Panc1 (cell line): ENCODE measurements at regions of chr1 and their contacts with region 1.

Region 1: DNA sequence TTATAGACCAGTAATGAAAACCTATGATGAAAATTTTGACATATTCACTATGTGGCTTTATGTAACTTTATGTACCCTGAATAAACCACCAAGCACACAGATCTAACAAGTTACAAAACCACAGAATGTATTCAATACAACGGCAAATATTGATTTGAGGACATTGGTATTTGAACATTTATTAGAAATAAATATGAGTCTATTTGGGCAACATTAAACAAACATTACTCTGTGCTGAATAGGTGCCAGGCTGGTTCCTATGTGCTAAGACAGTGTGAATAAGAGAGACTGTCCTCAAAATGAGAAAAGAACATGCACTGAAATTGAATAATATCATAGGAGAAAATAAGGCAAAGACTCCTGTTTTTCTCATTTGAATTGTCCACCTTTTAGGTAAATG is 1341.2 kb downstream of the PLA2G4A start:
- DNase-seq: no peak
- ATAC-seq: no peak
- H3K4me3 ChIP-seq: no peak overlapping the region
- H3K27ac ChIP-seq: no peak overlapping the region
- H3K4me1 ChIP-seq: no peaks in the 10 kb centered on the region
- H3K27me3 ChIP-seq: no peaks in the 10 kb centered on the region
- CTCF ChIP-seq: no peak

Region 2: GRCh38 chr1:188402986-188403385 is 233.0 kb after region 1 on chr1:
- CTCF ChIA-PET with region 1: no interaction called
- POLR2A ChIA-PET with region 1: no interaction called
- in situ Hi-C with region 1: no loop called
- intact Hi-C with region 1: loop called (anchors 10 kb)
- DNase-seq: no peak
- ATAC-seq: no peak
- H3K4me3 ChIP-seq: no peak overlapping the region
- H3K27ac ChIP-seq: no peak overlapping the region
- H3K4me1 ChIP-seq: no peaks in the 10 kb centered on the region
- H3K27me3 ChIP-seq: no peaks in the 10 kb centered on the region
- CTCF ChIP-seq: no peak